GM10248 (cell line): ENCODE measurements at regions of chr3 and their contacts with region 1.

Region 1: DNA sequence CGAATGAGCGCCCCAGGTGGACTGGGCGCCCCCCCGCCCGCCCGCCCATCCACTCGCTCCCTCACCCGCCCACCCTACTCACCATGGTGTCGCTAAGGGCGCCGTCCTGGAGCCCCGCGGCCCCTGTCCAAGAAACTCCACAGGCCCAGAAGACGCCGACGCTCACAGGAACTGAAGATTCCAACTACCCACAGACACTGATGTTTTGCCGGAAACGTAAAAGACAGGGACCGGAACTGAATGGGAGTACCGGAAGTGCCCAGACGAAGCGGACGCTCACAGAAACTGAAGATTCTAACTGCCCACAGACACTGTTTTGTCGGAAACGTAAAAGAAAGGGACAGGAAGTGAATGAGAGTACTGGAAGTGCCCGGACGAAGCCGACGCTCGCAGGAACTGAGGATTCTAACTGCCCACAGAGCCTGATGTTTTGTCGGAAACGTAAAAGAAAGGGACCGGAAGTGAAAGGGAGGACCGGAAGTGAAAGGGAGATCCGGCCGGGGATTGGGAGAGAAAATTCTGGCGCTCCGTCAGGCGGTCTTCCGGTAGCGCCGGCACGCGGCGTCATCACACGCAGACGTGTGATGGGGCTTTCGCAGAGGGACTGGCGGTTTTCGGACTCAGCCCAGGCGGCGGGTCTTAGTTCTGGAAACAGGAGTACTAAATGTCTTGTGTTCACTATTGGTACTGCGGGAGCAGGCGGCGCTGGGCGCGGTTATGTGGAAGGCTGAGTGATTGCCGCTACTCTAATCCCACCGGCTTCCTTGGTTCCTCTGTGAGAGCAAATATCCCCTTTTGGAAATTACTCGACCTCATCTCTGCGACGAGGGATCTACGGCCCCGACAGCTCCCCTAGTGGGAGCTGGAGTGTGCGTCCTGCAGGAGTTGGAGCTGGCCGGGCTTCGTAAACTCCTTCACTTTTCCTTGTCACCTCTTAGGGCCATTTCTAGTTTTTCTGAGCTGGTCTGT is at the start of gene ISY1:
- DNase-seq: peak; percentile 91
- CTCF ChIP-seq: peak; percentile 81

Region 2: GRCh38 chr3:129173206-129173605 is 12.0 kb after region 1 on chr3:
- CTCF ChIA-PET with region 1: interaction called, 18 read pairs
- POLR2A ChIA-PET with region 1: no interaction called
- DNase-seq: no peak
- CTCF ChIP-seq: no peak

Region 3: DNA sequence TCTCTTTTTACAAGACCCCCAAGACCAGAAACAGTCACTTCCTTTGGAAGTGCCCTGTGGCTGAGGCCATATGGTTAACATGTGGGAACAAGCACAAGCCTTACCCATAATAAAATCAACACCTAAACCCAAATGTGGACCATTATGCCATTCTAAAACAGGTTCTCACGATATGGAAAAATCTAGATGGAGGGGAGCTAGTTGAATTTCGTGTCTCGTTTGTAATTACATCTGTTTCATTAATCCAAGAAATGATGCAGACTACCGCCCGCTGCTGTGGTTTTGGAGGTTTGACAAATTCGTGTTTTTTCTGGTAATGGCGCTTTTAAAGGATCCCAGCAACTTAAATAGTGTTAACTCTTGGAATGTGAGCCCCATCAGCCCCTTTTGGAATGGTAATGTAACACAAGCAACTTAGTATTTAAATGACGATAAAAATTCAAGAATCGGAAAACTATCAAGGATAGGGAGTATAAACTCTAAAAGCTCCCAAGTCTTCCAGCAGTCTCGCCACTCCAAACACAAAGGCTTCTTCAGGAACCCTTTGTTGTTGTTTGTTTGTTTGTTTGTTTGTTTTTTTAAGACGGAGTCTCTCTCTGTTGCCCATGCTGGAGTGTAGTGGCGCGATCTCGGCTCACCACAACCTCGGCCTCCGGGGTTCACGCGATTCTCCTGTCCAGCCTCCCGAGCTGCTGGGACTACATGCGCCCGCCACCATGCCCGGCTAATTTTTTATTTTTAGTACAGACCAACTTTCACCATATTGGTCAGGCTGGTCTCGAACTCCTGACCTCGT is 21.4 kb after region 1 on chr3:
- CTCF ChIA-PET with region 1: interaction called, 14 read pairs
- POLR2A ChIA-PET with region 1: interaction called, 3 read pairs
- DNase-seq: no peak
- CTCF ChIP-seq: no peak